ENCODE measurements at regions of chr16 and their contacts with region 1.

Region 1: DNA sequence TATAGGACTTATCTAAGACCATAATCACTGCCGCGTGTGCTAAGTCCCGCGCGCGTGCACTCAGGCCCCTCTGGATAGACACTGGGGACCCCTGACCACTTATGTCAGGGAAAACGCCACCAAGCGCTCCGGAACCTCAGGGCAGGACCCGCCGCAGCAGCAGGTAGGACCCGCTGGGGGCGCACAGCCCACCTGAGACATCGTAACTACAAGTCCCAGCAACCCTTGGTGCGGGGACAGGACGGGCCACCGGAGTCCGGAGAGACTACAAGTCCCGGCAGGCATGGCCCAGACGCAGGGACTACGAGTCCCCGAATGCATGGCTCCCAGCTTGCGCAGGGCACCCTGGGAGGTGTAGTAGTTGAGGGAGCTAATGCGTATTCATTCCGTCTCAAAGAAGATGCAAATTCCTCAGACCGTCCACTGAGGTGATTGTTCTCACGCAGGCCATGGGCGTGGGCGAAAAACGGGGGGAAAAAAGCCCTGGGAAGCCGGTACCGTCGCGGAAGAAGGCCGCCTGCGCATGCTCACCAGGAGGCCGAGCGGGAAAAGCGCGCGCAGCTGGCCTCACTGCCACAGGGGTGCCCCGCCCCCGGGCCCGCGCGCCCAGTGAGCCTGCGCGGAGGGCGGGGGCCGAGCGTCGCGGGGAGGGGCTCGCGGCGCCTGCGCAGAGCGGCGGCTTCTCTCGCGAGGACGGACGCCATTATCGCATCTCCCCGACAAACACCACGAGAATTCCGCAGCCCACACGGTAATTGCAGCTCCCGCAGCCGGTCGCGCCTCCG is at the start of gene BANP:
- DNase-seq: peak; percentile 99
- ATAC-seq: peak; percentile 95
- H3K4me3 Mint-ChIP-seq: peak within 1 kb of the TSS; percentile 88
- H3K27ac Mint-ChIP-seq: peak within 1 kb of the TSS; percentile 99
- H3K4me1 Mint-ChIP-seq: peaks cover 51% of the 10 kb centered on the region
- H3K27me3 Mint-ChIP-seq: no peaks in the 10 kb centered on the region
- CTCF ChIP-seq: peak; percentile 73
- total RNA-seq, gene BANP: 32.1 to 36.1 TPM

Region 2: DNA sequence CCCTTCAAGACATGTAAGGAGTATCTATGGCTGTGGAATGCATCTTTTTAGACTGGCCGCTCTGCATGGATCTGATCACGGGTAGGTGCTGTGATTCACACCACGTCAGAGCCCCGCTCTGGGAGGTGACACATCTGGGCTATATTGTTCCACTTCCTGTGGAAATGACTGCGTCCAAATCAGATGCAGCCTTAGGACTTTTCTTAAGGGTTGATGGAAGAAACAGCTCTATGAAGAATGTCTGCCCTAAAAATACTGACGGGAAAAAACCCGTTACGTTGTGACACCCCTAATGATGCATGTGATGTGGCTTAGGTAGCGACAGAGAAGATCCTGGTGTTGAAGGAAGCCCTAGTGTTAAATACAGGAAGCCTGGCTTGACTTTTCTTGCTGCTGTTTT is 12.4 kb after region 1 on chr16:
- CTCF ChIA-PET with region 1: interaction called, 5 read pairs
- POLR2A ChIA-PET with region 1: interaction called, 10 read pairs
- intact Hi-C with region 1: no loop called
- DNase-seq: peak; percentile 91
- ATAC-seq: peak; percentile 95
- H3K4me3 Mint-ChIP-seq: peak overlapping the region; percentile 45
- H3K27ac Mint-ChIP-seq: peak overlapping the region; percentile 92
- H3K4me1 Mint-ChIP-seq: peaks cover 76% of the 10 kb centered on the region
- H3K27me3 Mint-ChIP-seq: no peaks in the 10 kb centered on the region
- CTCF ChIP-seq: no peak